ENCODE measurements at regions of chr2 and their contacts with region 1.

Region 1: GRCh38 chr2:134275058-134275862 is 21.4 kb downstream of the MGAT5 start:
- DNase-seq: peak; percentile 93
- ATAC-seq: peak; percentile 91
- H3K4me3 ChIP-seq: peak overlapping the region in 4 of 5 experiments; percentile 6 to 57 (median 26)
- H3K4me3 Mint-ChIP-seq: peak overlapping the region; percentile 90
- H3K27ac ChIP-seq: peak overlapping the region; percentile 77 to 80
- H3K27ac Mint-ChIP-seq: peak overlapping the region; percentile 96
- H3K4me1 ChIP-seq: peaks cover 97% of the 10 kb centered on the region in 2 donors
- H3K4me1 Mint-ChIP-seq: peaks cover 97% of the 10 kb centered on the region
- H3K27me3 ChIP-seq: no peaks in the 10 kb centered on the region
- H3K27me3 Mint-ChIP-seq: no peaks in the 10 kb centered on the region
- CTCF ChIP-seq: no peak

Region 2: DNA sequence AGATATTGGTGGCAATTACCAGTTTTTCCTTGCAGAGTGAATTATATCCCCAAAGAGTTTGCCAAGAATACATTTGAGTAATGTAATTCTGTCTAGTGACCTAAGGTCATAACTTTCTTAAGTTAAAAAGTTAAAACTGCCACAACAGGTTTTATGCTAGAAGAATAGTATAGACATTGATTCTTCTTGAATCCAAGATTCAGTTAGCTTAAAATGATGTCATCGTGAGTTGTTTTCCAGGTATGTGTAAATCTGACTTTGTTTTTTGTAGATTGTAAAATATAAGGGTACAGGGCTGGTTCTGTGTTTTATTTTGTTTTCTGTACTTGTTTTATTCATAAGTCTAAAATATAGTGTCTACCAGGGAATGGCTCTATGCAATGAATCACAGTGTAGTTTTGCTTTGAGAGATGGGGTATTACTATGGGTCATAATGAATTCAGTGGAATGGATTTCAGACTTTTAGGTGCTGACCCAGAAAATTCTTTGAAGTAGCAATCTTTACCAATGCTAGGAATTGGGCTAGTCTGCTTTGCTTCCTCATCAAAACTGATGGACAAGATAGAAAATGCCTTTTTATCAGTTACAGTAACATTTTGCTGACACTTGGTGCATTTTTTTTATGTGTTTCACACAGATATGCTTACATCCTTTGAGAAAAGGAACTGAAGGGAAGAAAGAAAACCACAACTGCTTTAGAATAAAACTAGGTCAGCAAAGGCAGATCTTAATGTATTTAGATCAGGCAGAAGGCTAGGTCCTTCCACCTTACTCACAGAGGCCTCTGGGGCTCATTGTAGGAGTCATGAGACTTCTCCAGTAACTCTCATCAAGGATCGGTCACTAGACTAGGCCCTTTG is 42.2 kb before region 1 on chr2:
- CTCF ChIA-PET with region 1: interaction called, 7 read pairs
- POLR2A ChIA-PET with region 1: no interaction called
- intact Hi-C with region 1: loop called (anchors 1 kb)
- DNase-seq: peak; percentile 63
- ATAC-seq: peak; percentile 31
- H3K4me3 ChIP-seq: peak overlapping the region in 3 of 5 experiments; percentile 7 to 48 (median 30)
- H3K4me3 Mint-ChIP-seq: peak overlapping the region; percentile 55
- H3K27ac ChIP-seq: peak overlapping the region; percentile 63 to 79
- H3K27ac Mint-ChIP-seq: peak overlapping the region; percentile 87
- H3K4me1 ChIP-seq: peaks cover 76% of the 10 kb centered on the region in 2 donors
- H3K4me1 Mint-ChIP-seq: peaks cover 88% of the 10 kb centered on the region
- H3K27me3 ChIP-seq: no peaks in the 10 kb centered on the region
- H3K27me3 Mint-ChIP-seq: no peaks in the 10 kb centered on the region
- CTCF ChIP-seq: no peak

Region 3: DNA sequence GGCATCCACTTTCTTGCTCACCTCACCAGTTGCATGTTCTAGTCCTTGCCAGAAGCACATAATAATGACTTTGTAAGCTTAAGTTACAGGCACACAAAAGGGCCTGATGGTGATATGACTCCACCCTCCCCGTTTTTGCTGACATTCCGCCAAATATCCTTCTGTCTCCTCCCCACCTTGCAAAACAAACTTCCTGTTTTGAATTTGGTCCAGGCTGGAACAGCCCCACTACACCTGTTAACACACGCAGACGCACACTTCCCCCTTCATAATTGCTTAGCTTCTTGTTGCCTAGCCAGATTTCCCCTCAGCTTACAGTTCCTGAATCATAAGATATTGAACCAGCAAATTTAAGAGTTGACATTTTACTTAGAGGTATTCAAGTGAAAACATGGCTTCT is 21.5 kb before region 1 on chr2 and contains the start of gene MGAT5:
- CTCF ChIA-PET with region 1: interaction called, 10 read pairs
- POLR2A ChIA-PET with region 1: interaction called, 7 read pairs
- intact Hi-C with region 1: loop called (anchors 1 kb)
- DNase-seq: peak; percentile 85
- ATAC-seq: peak; percentile 59
- H3K4me3 ChIP-seq: peak within 1 kb of the TSS; percentile 30 to 66 (median 62)
- H3K4me3 Mint-ChIP-seq: peak within 1 kb of the TSS; percentile 72
- H3K27ac ChIP-seq: peak within 1 kb of the TSS; percentile 83 to 87
- H3K27ac Mint-ChIP-seq: peak within 1 kb of the TSS; percentile 90
- H3K4me1 ChIP-seq: peaks cover 92 to 95% of the 10 kb centered on the region in 2 donors
- H3K4me1 Mint-ChIP-seq: peaks cover 90% of the 10 kb centered on the region
- H3K27me3 ChIP-seq: no peaks in the 10 kb centered on the region
- H3K27me3 Mint-ChIP-seq: no peaks in the 10 kb centered on the region
- CTCF ChIP-seq: no peak
- total RNA-seq, gene MGAT5: 177 and 184 TPM in 2 replicates

Region 4: GRCh38 chr2:134261398-134262131 is 13.7 kb before region 1 on chr2:
- CTCF ChIA-PET with region 1: interaction called, 14 read pairs
- POLR2A ChIA-PET with region 1: interaction called, 37 read pairs
- intact Hi-C with region 1: loop called (anchors 1 kb)
- DNase-seq: peak; percentile 78
- ATAC-seq: peak; percentile 55
- H3K4me3 ChIP-seq: peak overlapping the region in 1 of 5 experiments; percentile 22
- H3K4me3 Mint-ChIP-seq: peak overlapping the region; percentile 80
- H3K27ac ChIP-seq: peak overlapping the region; percentile 94 to 96
- H3K27ac Mint-ChIP-seq: peak overlapping the region; percentile 99
- H3K4me1 ChIP-seq: peaks cover 92 to 94% of the 10 kb centered on the region in 2 donors
- H3K4me1 Mint-ChIP-seq: peaks cover 86% of the 10 kb centered on the region
- H3K27me3 ChIP-seq: no peaks in the 10 kb centered on the region
- H3K27me3 Mint-ChIP-seq: no peaks in the 10 kb centered on the region
- CTCF ChIP-seq: no peak

Region 5: GRCh38 chr2:134295441-134295840 is 20.2 kb after region 1 on chr2:
- CTCF ChIA-PET with region 1: interaction called, 3 read pairs
- POLR2A ChIA-PET with region 1: interaction called, 3 read pairs
- intact Hi-C with region 1: loop called (anchors 1 kb)
- DNase-seq: no peak
- ATAC-seq: no peak
- H3K4me3 ChIP-seq: no peak overlapping the region
- H3K4me3 Mint-ChIP-seq: peak overlapping the region; percentile 46
- H3K27ac ChIP-seq: peak overlapping the region; percentile 85 to 95
- H3K27ac Mint-ChIP-seq: peak overlapping the region; percentile 84
- H3K4me1 ChIP-seq: peaks cover 77 to 88% of the 10 kb centered on the region in 2 donors
- H3K4me1 Mint-ChIP-seq: peaks cover 56% of the 10 kb centered on the region
- H3K27me3 ChIP-seq: no peaks in the 10 kb centered on the region
- H3K27me3 Mint-ChIP-seq: no peaks in the 10 kb centered on the region
- CTCF ChIP-seq: no peak

Region 6: GRCh38 chr2:134324947-134325346 is 49.7 kb after region 1 on chr2:
- CTCF ChIA-PET with region 1: no interaction called
- POLR2A ChIA-PET with region 1: no interaction called
- intact Hi-C with region 1: loop called (anchors 1 kb)
- DNase-seq: peak; percentile 70
- ATAC-seq: peak; percentile 68
- H3K4me3 ChIP-seq: peak overlapping the region in 1 of 5 experiments; percentile 17
- H3K4me3 Mint-ChIP-seq: peak overlapping the region; percentile 66
- H3K27ac ChIP-seq: peak overlapping the region; percentile 42 to 61
- H3K27ac Mint-ChIP-seq: peak overlapping the region; percentile 90
- H3K4me1 ChIP-seq: peaks cover 58 to 83% of the 10 kb centered on the region in 2 donors
- H3K4me1 Mint-ChIP-seq: peaks cover 90% of the 10 kb centered on the region
- H3K27me3 ChIP-seq: no peaks in the 10 kb centered on the region
- H3K27me3 Mint-ChIP-seq: no peaks in the 10 kb centered on the region
- CTCF ChIP-seq: no peak

Region 7: DNA sequence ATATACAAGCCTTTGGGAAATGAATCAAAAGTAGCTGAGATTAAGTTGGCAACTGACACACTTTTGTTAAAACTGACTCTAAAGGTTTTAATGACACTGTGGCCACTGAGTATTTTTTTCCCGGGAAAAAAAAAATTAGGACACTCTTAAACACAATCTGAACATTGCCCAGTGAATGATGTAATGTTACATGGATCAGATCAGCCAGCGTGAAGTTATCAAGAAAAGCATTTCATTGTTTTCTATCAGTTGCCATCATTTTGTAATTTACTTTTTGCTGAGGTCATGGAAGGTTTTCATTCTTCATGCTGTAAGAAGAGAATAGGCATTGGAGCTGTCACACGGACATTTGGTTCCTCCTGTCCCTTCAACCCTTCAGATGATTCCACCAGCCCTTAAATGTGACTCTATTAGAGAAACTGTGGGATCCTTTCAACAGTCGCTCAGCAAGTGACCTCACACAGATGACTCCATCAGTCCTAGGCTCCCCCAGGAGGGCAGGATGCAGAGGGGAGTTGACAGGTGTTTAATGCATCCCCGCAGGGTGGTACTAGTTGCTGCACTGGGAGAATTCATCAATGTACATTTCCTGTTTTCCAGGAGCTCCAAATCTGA is 142.8 kb after region 1 on chr2:
- CTCF ChIA-PET with region 1: no interaction called
- POLR2A ChIA-PET with region 1: no interaction called
- intact Hi-C with region 1: no loop called
- DNase-seq: no peak
- ATAC-seq: no peak
- H3K4me3 ChIP-seq: no peak overlapping the region
- H3K4me3 Mint-ChIP-seq: no peak overlapping the region
- H3K27ac ChIP-seq: no peak overlapping the region
- H3K27ac Mint-ChIP-seq: peak overlapping the region; percentile 23
- H3K4me1 ChIP-seq: no peaks in the 10 kb centered on the region
- H3K4me1 Mint-ChIP-seq: no peaks in the 10 kb centered on the region
- H3K27me3 ChIP-seq: no peaks in the 10 kb centered on the region
- H3K27me3 Mint-ChIP-seq: no peaks in the 10 kb centered on the region
- CTCF ChIP-seq: no peak

Region 8: GRCh38 chr2:134918526-134919340 is 643.5 kb after region 1 on chr2 and contains the start of gene CCNT2:
- CTCF ChIA-PET with region 1: no interaction called
- POLR2A ChIA-PET with region 1: no interaction called
- intact Hi-C with region 1: loop called (anchors 5 kb)
- DNase-seq: peak; percentile 100
- ATAC-seq: peak; percentile 82
- H3K4me3 ChIP-seq: peak within 1 kb of the TSS; percentile 78 to 98 (median 93)
- H3K4me3 Mint-ChIP-seq: peak within 1 kb of the TSS; percentile 85
- H3K27ac ChIP-seq: peak within 1 kb of the TSS; percentile 94 to 96
- H3K27ac Mint-ChIP-seq: peak within 1 kb of the TSS; percentile 94
- H3K4me1 ChIP-seq: peaks cover 31 to 32% of the 10 kb centered on the region in 2 donors
- H3K4me1 Mint-ChIP-seq: peaks cover 48% of the 10 kb centered on the region
- H3K27me3 ChIP-seq: no peaks in the 10 kb centered on the region
- H3K27me3 Mint-ChIP-seq: no peaks in the 10 kb centered on the region
- CTCF ChIP-seq: no peak
- total RNA-seq, gene CCNT2: 86.7 and 91.0 TPM in 2 replicates